Heart left ventricle (tissue), 16 donors: ENCODE measurements at regions of chr14 and their contacts with region 1.

Region 1: DNA sequence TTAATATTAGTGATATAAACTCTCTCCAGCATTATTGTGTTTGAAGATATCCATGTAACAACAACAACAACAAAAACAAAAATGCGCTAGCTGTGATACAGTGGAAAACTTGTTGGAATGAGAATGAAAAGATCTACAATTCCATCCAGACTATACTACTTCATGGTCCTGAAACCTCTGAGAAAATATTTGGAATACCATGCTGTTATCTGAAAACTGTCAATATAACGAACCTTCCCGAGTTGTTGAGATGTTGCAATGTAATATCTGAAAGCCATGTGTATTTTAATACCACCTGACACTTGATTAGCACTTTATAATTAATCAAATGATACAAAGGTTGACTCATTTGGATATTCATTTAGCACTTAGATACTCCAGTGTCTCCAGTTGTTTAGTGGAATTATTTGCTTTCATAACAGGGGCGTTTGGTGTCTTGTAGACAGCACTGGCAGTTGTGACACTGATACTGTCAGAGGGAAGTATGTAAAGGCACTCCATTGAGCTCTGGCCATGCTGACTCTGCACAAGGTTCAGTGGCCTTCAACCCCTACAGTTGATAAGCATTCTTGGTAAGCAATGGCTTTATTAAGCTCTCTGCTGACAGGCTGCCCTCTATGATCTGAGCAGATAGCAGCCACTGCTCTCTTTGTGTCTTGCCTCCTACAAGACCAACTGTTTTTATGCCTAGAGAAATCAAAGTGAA is 447.1 kb upstream of the SEL1L start:
- DNase-seq: no peak
- ATAC-seq: no peak
- H3K4me3 ChIP-seq: no peak overlapping the region
- H3K27ac ChIP-seq: no peak overlapping the region
- H3K4me1 ChIP-seq: no peaks in the 10 kb centered on the region
- H3K27me3 ChIP-seq: peaks cover 0 to 2% (median 0%) of the 10 kb centered on the region in 9 donors
- CTCF ChIP-seq: no peak
- POLR2A ChIP-seq: no peak

Region 2: GRCh38 chr14:81625343-81625742 is 355.4 kb before region 1 on chr14:
- intact Hi-C with region 1: loop called in 2 of 10 experiments (anchors 10 kb)
- DNase-seq: no peak
- ATAC-seq: peak in 1 of 4 donors; percentile 57
- H3K4me3 ChIP-seq: no peak overlapping the region
- H3K27ac ChIP-seq: no peak overlapping the region
- H3K4me1 ChIP-seq: no peaks in the 10 kb centered on the region
- H3K27me3 ChIP-seq: no peaks in the 10 kb centered on the region
- CTCF ChIP-seq: peak; percentile 16 to 66 (median 44)
- POLR2A ChIP-seq: no peak

Region 3: GRCh38 chr14:81868166-81868565 is 112.6 kb before region 1 on chr14:
- intact Hi-C with region 1: no loop called
- DNase-seq: no peak
- ATAC-seq: no peak
- H3K4me3 ChIP-seq: no peak overlapping the region
- H3K27ac ChIP-seq: no peak overlapping the region
- H3K4me1 ChIP-seq: no peaks in the 10 kb centered on the region
- H3K27me3 ChIP-seq: no peaks in the 10 kb centered on the region
- CTCF ChIP-seq: no peak
- POLR2A ChIP-seq: no peak

Region 4: DNA sequence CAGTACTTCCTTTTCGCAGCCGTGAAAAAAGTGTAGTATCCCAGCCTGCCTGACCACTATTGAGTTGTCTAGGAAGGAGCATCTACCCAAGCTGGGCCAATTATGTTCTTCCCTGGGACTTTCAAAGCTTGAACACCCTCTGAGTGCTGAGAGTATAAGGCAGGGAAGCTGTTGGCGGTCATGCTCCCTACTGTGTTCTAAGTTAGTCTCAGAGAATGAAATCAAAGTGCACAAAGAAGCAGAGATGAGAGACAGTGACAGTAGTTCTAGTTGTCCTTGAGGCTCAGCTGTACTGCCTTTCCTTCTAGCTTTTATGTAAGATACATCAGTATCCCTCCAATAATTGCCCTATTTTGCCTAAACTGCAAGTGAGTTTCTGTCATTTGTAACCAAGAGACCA is 20.0 kb before region 1 on chr14:
- intact Hi-C with region 1: no loop called
- DNase-seq: no peak
- ATAC-seq: no peak
- H3K4me3 ChIP-seq: no peak overlapping the region
- H3K27ac ChIP-seq: no peak overlapping the region
- H3K4me1 ChIP-seq: no peaks in the 10 kb centered on the region
- H3K27me3 ChIP-seq: no peaks in the 10 kb centered on the region
- CTCF ChIP-seq: no peak
- POLR2A ChIP-seq: no peak

Region 5: GRCh38 chr14:82029038-82029437 is 48.3 kb after region 1 on chr14:
- intact Hi-C with region 1: no loop called
- DNase-seq: no peak
- ATAC-seq: no peak
- H3K4me3 ChIP-seq: no peak overlapping the region
- H3K27ac ChIP-seq: no peak overlapping the region
- H3K4me1 ChIP-seq: no peaks in the 10 kb centered on the region
- H3K27me3 ChIP-seq: no peaks in the 10 kb centered on the region
- CTCF ChIP-seq: no peak
- POLR2A ChIP-seq: no peak

Region 6: GRCh38 chr14:82094829-82095345 is 114.1 kb after region 1 on chr14:
- intact Hi-C with region 1: no loop called
- DNase-seq: no peak
- ATAC-seq: no peak
- H3K4me3 ChIP-seq: no peak overlapping the region
- H3K27ac ChIP-seq: no peak overlapping the region
- H3K4me1 ChIP-seq: no peaks in the 10 kb centered on the region
- H3K27me3 ChIP-seq: no peaks in the 10 kb centered on the region
- CTCF ChIP-seq: no peak
- POLR2A ChIP-seq: no peak